ENCODE measurements at regions of chr7 and their contacts with region 1.

Region 1: DNA sequence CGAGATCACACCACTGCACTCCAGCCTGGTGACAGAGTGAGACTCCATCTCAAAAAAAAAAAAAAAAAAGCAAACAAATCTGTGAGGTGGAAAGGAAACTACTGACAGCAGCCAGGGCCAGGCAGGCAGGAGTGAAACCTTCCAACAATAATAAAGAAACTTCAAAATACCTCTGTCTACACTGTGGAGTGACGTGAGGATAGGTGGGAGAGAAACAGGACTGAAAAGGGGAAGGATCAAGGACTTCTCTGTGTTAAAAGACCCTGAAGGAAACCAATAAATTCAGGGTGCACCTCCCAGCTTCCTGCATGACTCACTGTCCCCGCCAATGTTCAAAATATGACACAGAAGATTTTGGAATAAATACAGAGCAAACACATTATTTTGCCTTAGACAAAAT is 82.9 kb downstream of the KIAA1549 start:
- DNase-seq: peak in 4 of 9 donors; percentile 14 to 36 (median 18)
- ATAC-seq: peak; percentile 49
- H3K4me3 ChIP-seq: no peak overlapping the region
- H3K4me3 Mint-ChIP-seq: peak overlapping the region in 7 of 10 donors; percentile 12 to 56 (median 27)
- H3K27ac ChIP-seq: no peak overlapping the region
- H3K27ac Mint-ChIP-seq: peak overlapping the region in 7 of 9 donors; percentile 16 to 75 (median 46)
- H3K4me1 ChIP-seq: peaks cover 9 to 26% of the 10 kb centered on the region in 2 donors
- H3K4me1 Mint-ChIP-seq: peaks cover 20 to 53% (median 48%) of the 10 kb centered on the region in 7 donors
- H3K27me3 ChIP-seq: no peaks in the 10 kb centered on the region
- H3K27me3 Mint-ChIP-seq: peaks cover 0 to 66% (median 0%) of the 10 kb centered on the region in 5 donors

Region 2: GRCh38 chr7:138981332-138982203 is 83.3 kb after region 1 on chr7 and contains the start of gene KIAA1549:
- CTCF ChIA-PET with region 1: interaction called, 4 read pairs
- POLR2A ChIA-PET with region 1: no interaction called
- intact Hi-C with region 1: loop called (anchors 1 to 5 kb)
- DNase-seq: peak in 8 of 9 donors; percentile 17 to 75 (median 26)
- ATAC-seq: peak; percentile 81
- H3K4me3 ChIP-seq: peak within 1 kb of the TSS; percentile 37
- H3K4me3 Mint-ChIP-seq: peak within 1 kb of the TSS; percentile 83 to 98 (median 90)
- H3K27ac ChIP-seq: no peak within 1 kb of the TSS
- H3K27ac Mint-ChIP-seq: peak within 1 kb of the TSS in 7 of 9 donors; percentile 12 to 82 (median 63)
- H3K4me1 ChIP-seq: peaks cover 5 to 6% of the 10 kb centered on the region in 2 donors
- H3K4me1 Mint-ChIP-seq: peaks cover 10 to 18% (median 13%) of the 10 kb centered on the region in 7 donors
- H3K27me3 ChIP-seq: peaks cover 10 to 13% of the 10 kb centered on the region in 2 donors
- H3K27me3 Mint-ChIP-seq: peaks cover 25 to 49% (median 35%) of the 10 kb centered on the region in 5 donors
- total RNA-seq, gene KIAA1549: 0.16 to 0.56 (median 0.25) TPM in 4 of 5 experiments, not detected in the other